ENCODE measurements at regions of chr3 and their contacts with region 1.

Region 1: GRCh38 chr3:48400824-48401433 is 28.9 kb downstream of the FBXW12 start:
- DNase-seq: peak; percentile 76
- ATAC-seq: peak; percentile 84
- H3K4me3 Mint-ChIP-seq: no peak overlapping the region
- H3K27ac Mint-ChIP-seq: peak overlapping the region; percentile 31
- H3K4me1 Mint-ChIP-seq: no peaks in the 10 kb centered on the region
- H3K27me3 Mint-ChIP-seq: no peaks in the 10 kb centered on the region

Region 2: GRCh38 chr3:47365213-47366153 is 1035.4 kb before region 1 on chr3:
- CTCF ChIA-PET with region 1: no interaction called
- POLR2A ChIA-PET with region 1: no interaction called
- intact Hi-C with region 1: no loop called
- DNase-seq: no peak
- ATAC-seq: no peak
- H3K4me3 Mint-ChIP-seq: no peak overlapping the region
- H3K27ac Mint-ChIP-seq: no peak overlapping the region
- H3K4me1 Mint-ChIP-seq: peaks cover 10% of the 10 kb centered on the region
- H3K27me3 Mint-ChIP-seq: peaks cover 2% of the 10 kb centered on the region

Region 3: DNA sequence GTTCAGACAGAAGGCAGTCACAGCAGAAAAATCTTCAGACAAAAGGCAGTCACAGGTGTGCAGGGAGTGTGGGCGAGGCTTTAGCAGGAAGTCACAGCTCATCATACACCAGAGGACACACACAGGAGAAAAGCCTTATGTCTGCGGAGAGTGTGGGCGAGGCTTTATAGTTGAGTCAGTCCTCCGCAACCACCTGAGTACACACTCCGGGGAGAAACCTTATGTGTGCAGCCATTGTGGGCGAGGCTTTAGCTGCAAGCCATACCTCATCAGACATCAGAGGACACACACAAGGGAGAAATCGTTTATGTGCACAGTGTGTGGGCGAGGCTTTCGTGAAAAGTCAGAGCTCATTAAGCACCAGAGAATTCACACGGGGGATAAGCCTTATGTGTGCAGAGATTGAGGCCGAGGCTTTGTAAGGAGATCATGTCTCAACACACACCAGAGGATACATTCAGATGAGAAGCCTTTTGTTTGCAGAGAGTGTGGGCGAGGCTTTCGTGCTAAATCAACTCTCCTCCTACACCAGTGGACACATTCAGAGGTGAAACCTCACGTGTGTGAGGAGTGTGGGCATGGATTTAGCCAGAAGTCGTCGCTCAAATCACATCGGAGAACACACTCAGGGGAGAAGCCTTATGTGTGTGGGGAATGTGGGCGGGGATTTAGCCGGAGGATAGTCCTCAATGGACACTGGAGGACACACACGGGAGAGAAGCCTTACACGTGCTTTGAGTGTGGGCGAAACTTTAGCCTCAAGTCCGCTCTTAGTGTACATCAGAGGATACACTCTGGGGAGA is 132.3 kb before region 1 on chr3:
- CTCF ChIA-PET with region 1: interaction called, 12 read pairs
- POLR2A ChIA-PET with region 1: interaction called, 5 read pairs
- intact Hi-C with region 1: loop called (anchors 5 to 10 kb)
- DNase-seq: peak; percentile 95
- ATAC-seq: peak; percentile 91
- H3K4me3 Mint-ChIP-seq: peak overlapping the region; percentile 57
- H3K27ac Mint-ChIP-seq: peak overlapping the region; percentile 92
- H3K4me1 Mint-ChIP-seq: peaks cover 39% of the 10 kb centered on the region
- H3K27me3 Mint-ChIP-seq: no peaks in the 10 kb centered on the region

Region 4: DNA sequence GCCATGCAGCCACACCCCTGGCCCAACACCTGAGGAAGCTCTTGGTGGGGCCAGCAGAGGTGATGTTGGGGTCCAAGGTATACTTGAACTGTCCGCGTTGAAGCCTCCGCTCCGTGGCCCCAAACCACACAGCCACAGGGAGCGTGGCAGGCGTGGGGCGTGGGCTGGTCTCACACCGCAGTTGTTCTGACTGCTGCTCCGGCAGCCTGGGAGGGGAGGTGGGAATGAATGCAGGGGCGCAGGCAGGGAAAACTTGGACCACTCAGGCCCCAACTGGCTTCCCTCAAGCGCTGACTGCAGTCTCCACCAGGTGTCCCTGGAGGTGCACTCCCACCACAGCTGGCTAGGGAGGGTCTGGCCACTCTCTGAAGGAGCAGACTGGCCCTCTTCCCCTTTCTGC is 14.6 kb after region 1 on chr3:
- CTCF ChIA-PET with region 1: interaction called, 12 read pairs
- POLR2A ChIA-PET with region 1: interaction called, 3 read pairs
- intact Hi-C with region 1: no loop called
- DNase-seq: no peak
- ATAC-seq: no peak
- H3K4me3 Mint-ChIP-seq: no peak overlapping the region
- H3K27ac Mint-ChIP-seq: no peak overlapping the region
- H3K4me1 Mint-ChIP-seq: no peaks in the 10 kb centered on the region
- H3K27me3 Mint-ChIP-seq: no peaks in the 10 kb centered on the region

Region 5: DNA sequence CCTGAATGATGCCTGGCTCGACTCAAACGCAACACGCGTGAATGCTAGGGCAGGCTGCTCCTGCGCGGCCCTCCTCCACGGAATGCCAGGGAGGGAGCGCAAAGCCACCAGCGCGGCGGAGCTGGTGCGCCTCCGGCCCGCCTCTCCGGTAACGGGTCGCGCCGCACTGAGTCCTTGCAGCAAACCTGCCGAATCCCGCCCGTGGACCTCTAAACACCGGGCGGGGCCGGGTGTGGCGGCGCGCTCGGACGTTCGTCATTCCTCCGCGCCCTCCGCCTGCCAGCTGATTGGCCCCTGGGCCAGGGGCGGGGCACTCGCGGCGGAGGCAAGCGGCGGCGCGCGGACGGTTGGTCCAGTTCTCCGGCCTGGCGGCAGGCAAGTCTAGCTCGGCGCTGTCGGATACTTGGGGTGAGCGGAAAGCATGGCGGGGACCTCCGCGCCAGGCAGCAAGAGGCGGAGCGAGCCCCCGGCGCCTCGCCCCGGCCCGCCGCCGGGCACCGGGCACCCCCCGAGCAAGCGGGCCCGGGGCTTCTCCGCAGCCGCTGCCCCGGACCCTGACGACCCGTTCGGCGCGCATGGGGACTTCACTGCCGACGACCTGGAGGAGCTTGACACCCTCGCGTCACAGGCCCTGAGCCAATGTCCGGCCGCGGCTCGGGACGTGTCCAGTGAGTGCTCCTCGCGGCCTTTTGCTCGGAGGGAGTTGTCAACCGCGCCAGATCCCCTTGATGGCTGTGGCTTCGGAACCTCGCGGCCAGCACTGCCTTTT is 45.7 kb after region 1 on chr3 and contains the start of gene ATRIP:
- CTCF ChIA-PET with region 1: interaction called, 31 read pairs
- POLR2A ChIA-PET with region 1: no interaction called
- intact Hi-C with region 1: no loop called
- DNase-seq: peak; percentile 91
- ATAC-seq: peak; percentile 98
- H3K4me3 Mint-ChIP-seq: peak within 1 kb of the TSS; percentile 83
- H3K27ac Mint-ChIP-seq: peak within 1 kb of the TSS; percentile 79
- H3K4me1 Mint-ChIP-seq: peaks cover 42% of the 10 kb centered on the region
- H3K27me3 Mint-ChIP-seq: no peaks in the 10 kb centered on the region
- total RNA-seq, gene ATRIP: 16.8 to 21.0 TPM

Region 6: GRCh38 chr3:48548729-48549705 is 148.1 kb after region 1 on chr3:
- CTCF ChIA-PET with region 1: interaction called, 39 read pairs
- POLR2A ChIA-PET with region 1: no interaction called
- intact Hi-C with region 1: loop called (anchors 1 kb)
- DNase-seq: peak; percentile 89
- ATAC-seq: peak; percentile 96
- H3K4me3 Mint-ChIP-seq: no peak overlapping the region
- H3K27ac Mint-ChIP-seq: no peak overlapping the region
- H3K4me1 Mint-ChIP-seq: peaks cover 9% of the 10 kb centered on the region
- H3K27me3 Mint-ChIP-seq: no peaks in the 10 kb centered on the region

Region 7: DNA sequence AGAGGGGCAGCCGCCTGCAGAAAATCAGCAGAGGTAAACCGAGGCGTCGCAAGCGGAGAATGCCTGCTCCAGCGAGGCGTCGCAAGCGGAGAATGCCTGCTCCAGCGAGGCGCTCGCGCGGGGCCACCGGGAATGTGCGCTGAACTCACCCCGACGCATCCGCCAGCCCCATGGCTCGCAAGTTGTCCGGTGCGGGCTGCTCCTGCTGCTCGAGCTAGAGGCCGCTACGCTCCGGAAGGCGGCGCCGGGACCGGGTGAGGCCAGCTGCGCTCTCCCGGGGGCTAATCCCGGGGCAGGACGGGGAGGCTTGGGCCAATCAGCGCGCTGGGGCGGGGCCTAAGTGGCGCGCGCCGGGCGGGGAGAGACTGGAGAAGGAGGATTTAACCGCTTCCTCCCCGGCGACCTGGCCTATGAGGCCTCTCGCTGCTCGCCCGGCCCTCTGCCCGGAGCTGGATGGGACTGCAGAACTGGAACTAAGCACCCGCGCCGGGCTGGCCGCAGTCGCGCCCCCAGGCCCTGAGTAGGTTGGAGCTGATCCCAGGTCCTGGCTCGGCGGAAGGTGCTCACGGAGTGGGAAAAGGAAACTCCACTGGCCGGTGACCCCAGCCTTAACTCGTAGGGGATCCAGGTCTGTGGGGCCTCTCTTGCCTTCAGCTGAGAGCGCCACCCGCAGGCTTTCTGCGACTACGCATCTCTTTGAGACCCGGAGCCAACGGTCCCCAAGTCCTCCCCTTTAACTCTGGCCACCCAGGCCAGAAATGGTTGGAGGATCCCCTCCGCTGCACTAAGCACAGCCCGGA is 234.5 kb after region 1 on chr3 and contains the start of gene SLC26A6:
- CTCF ChIA-PET with region 1: interaction called, 16 read pairs
- POLR2A ChIA-PET with region 1: no interaction called
- intact Hi-C with region 1: loop called in 1 of 2 experiments (anchors 1 kb)
- DNase-seq: peak; percentile 97
- ATAC-seq: peak; percentile 97
- H3K4me3 Mint-ChIP-seq: peak within 1 kb of the TSS; percentile 84
- H3K27ac Mint-ChIP-seq: peak within 1 kb of the TSS; percentile 76
- H3K4me1 Mint-ChIP-seq: peaks cover 13% of the 10 kb centered on the region
- H3K27me3 Mint-ChIP-seq: no peaks in the 10 kb centered on the region
- total RNA-seq, gene SLC26A6: 35.0 to 38.5 TPM

Region 8: DNA sequence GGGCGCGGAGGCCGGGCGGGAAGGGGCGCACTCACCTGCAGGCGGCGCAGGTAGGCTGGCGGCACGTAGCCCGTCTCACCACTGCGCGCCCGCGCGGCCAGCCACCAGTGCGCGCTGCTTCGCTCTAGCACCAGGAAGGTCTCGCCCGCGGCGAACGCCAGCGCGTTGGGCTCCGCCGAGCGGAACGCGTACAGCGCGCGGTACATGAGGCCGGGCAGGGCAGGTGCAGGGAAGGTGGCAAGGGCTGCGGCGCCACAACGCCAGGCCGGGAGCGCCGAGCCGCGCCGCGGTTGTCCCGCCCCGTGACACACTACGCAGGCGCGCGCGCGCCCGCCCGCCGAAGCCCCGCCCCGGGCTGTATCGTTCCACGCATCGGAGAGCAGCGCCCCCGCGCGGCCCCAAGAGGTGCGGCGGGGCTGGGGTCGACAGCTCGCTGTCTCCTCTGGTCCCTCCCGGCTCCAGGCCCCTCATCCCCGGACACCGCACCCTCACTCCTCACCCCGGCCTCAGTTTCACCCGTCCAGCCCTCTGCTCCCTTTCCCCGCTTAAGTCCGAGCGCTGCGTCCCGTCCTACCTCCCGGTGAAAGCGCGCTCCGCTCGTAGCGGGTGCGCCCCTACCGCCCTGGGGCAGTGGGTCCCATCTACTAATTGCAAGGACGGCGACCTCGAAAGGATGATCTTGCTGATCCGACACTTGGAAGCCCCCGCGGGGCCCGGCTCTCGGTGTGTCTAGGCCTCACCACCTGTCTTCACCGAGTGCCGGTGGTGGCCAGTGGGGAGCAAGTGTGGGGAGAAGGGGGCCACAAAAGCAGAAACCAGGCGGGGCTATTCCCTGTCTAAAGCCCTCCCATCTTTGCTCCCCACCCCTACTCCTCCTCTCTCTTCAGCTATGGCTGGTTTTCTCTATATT is 284.9 kb after region 1 on chr3 and contains the start of gene NCKIPSD:
- CTCF ChIA-PET with region 1: interaction called, 8 read pairs
- POLR2A ChIA-PET with region 1: no interaction called
- intact Hi-C with region 1: loop called in 1 of 2 experiments (anchors 1 kb)
- DNase-seq: peak; percentile 96
- ATAC-seq: peak; percentile 94
- H3K4me3 Mint-ChIP-seq: peak within 1 kb of the TSS; percentile 82
- H3K27ac Mint-ChIP-seq: peak within 1 kb of the TSS; percentile 68
- H3K4me1 Mint-ChIP-seq: peaks cover 16% of the 10 kb centered on the region
- H3K27me3 Mint-ChIP-seq: no peaks in the 10 kb centered on the region
- total RNA-seq, gene NCKIPSD: 61.0 to 67.3 TPM

Region 9: DNA sequence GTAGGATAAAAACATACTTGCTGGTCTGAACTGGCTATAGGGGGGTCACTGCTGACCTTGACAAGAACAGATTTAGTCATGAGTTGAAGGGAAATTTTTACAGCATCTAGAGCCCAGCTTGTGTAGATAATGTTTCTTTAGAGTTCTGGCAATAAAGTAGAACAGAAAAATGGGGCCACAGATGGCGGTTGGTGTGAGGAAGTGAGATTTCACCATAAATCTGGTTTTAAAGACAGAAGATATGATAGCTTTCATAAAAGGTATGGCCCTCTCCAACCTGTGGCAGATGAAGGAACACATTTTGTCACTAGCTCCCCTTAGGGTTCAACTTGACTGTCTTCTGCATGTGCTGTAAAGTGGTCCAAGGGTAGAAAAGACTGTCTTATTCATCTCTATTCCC is 652.6 kb after region 1 on chr3:
- CTCF ChIA-PET with region 1: no interaction called
- POLR2A ChIA-PET with region 1: no interaction called
- intact Hi-C with region 1: no loop called
- DNase-seq: no peak
- ATAC-seq: no peak
- H3K4me3 Mint-ChIP-seq: no peak overlapping the region
- H3K27ac Mint-ChIP-seq: no peak overlapping the region
- H3K4me1 Mint-ChIP-seq: peaks cover 2% of the 10 kb centered on the region
- H3K27me3 Mint-ChIP-seq: no peaks in the 10 kb centered on the region

Measured in activated CD4-positive, alpha-beta T cell treated with anti-CD3 and anti-CD28 coated beads for 36 hours (primary cell).